GM12878 (cell line): ENCODE measurements at regions of chr6 and their contacts with region 1.

Region 1: GRCh38 chr6:122730775-122731386 is 48.6 kb upstream of the FABP7 start:
- DNase-seq: no peak
- ATAC-seq: peak; percentile 61
- H3K4me3 ChIP-seq: no peak overlapping the region
- H3K27ac ChIP-seq: no peak overlapping the region
- H3K4me1 ChIP-seq: no peaks in the 10 kb centered on the region
- H3K27me3 ChIP-seq: no peaks in the 10 kb centered on the region
- CTCF ChIP-seq: peak; percentile 61 to 77 (median 65)
- EP300 ChIP-seq: no peak
- POLR2A ChIP-seq: no peak
- RAD21 ChIP-seq: peak; percentile 86

Region 2: GRCh38 chr6:122471107-122472021 is 259.5 kb before region 1 on chr6 and contains the start of gene SERINC1:
- CTCF ChIA-PET with region 1: interaction called, 3 read pairs
- POLR2A ChIA-PET with region 1: no interaction called
- RAD21 ChIA-PET with region 1: no interaction called
- SMC1A ChIA-PET with region 1: interaction called, 6 read pairs
- in situ Hi-C with region 1: no loop called
- intact Hi-C with region 1: loop called (anchors 5 kb)
- DNase-seq: peak; percentile 66
- ATAC-seq: peak; percentile 98
- H3K4me3 ChIP-seq: peak within 1 kb of the TSS; percentile 92
- H3K27ac ChIP-seq: peak within 1 kb of the TSS; percentile 89
- H3K4me1 ChIP-seq: no peaks in the 10 kb centered on the region; the same call in 1 of the 2 replicates
- H3K27me3 ChIP-seq: no peaks in the 10 kb centered on the region
- CTCF ChIP-seq: no peak
- EP300 ChIP-seq: no peak
- POLR2A ChIP-seq: peak; percentile 91
- RAD21 ChIP-seq: no peak
- polyA plus RNA-seq, gene SERINC1: 18.5 to 22.5 TPM

Region 3: GRCh38 chr6:122609856-122610689 is 120.8 kb before region 1 on chr6 and contains the start of gene PKIB:
- CTCF ChIA-PET with region 1: interaction called, 46 read pairs
- POLR2A ChIA-PET with region 1: no interaction called
- RAD21 ChIA-PET with region 1: interaction called, 53 read pairs
- SMC1A ChIA-PET with region 1: interaction called, 61 read pairs
- in situ Hi-C with region 1: no loop called
- intact Hi-C with region 1: loop called (anchors 5 kb)
- DNase-seq: no peak
- ATAC-seq: peak; percentile 98
- H3K4me3 ChIP-seq: peak within 1 kb of the TSS; percentile 50
- H3K27ac ChIP-seq: no peak within 1 kb of the TSS
- H3K4me1 ChIP-seq: peaks cover 5% of the 10 kb centered on the region
- H3K27me3 ChIP-seq: peaks cover 8 to 17% of the 10 kb centered on the region in 2 experiments
- CTCF ChIP-seq: peak in 2 of 3 experiments; percentile 19 to 24; a peak in 2 of 6 replicates
- EP300 ChIP-seq: no peak
- POLR2A ChIP-seq: no peak
- RAD21 ChIP-seq: no peak
- polyA plus RNA-seq, gene PKIB: 0.97 to 1.8 TPM

Region 4: DNA sequence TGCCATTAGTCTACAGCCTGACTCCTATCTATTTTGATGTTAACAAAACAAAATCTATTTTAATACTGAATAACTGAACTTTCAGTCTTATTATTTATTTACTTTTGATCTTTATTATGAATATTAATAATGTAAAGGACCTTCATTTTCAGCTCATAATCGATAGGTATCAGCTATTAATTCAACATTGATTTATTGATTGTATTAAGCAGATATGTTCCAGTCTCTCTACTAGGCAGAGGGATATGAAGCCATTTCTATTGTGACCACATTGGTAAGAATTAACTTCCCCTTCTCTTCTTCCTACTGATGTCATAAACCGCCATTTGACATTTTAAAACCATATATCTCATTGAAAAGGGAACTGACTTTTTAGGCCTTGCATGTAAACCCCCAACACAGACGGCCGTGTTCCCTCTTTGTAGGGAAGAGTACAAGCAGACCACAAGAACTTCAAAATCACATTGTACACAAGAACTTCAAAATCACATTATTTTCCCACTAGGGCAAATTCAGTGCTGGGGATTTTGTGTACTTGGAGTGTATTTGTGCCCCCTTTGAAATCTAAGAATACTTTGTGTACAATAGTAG is 20.9 kb before region 1 on chr6:
- CTCF ChIA-PET with region 1: interaction called, 29 read pairs
- POLR2A ChIA-PET with region 1: no interaction called
- RAD21 ChIA-PET with region 1: interaction called, 10 read pairs
- SMC1A ChIA-PET with region 1: interaction called, 215 read pairs
- in situ Hi-C with region 1: no loop called
- intact Hi-C with region 1: no loop called
- DNase-seq: peak; percentile 11
- ATAC-seq: peak; percentile 82
- H3K4me3 ChIP-seq: no peak overlapping the region
- H3K27ac ChIP-seq: no peak overlapping the region
- H3K4me1 ChIP-seq: no peaks in the 10 kb centered on the region
- H3K27me3 ChIP-seq: no peaks in the 10 kb centered on the region; a peak in 1 of 4 replicates
- CTCF ChIP-seq: no peak
- EP300 ChIP-seq: peak; percentile 69 to 80; a peak in 3 of 4 replicates
- POLR2A ChIP-seq: no peak
- RAD21 ChIP-seq: no peak

Region 5: GRCh38 chr6:122789182-122790027 is 58.5 kb after region 1 on chr6 and contains the start of gene SMPDL3A:
- CTCF ChIA-PET with region 1: interaction called, 25 read pairs
- POLR2A ChIA-PET with region 1: no interaction called
- RAD21 ChIA-PET with region 1: interaction called, 6 read pairs
- SMC1A ChIA-PET with region 1: interaction called, 50 read pairs
- in situ Hi-C with region 1: no loop called
- intact Hi-C with region 1: no loop called
- DNase-seq: no peak
- ATAC-seq: peak; percentile 82
- H3K4me3 ChIP-seq: peak within 1 kb of the TSS; percentile 15; the same call in 1 of the 2 replicates
- H3K27ac ChIP-seq: no peak within 1 kb of the TSS
- H3K4me1 ChIP-seq: no peaks in the 10 kb centered on the region
- H3K27me3 ChIP-seq: peaks cover 7 to 16% of the 10 kb centered on the region in 2 experiments
- CTCF ChIP-seq: peak; percentile 3 to 38 (median 19); a peak in 2 of 6 replicates
- EP300 ChIP-seq: no peak
- POLR2A ChIP-seq: no peak
- RAD21 ChIP-seq: no peak
- polyA plus RNA-seq, gene SMPDL3A: 0.05 to 0.07 TPM

Region 6: DNA sequence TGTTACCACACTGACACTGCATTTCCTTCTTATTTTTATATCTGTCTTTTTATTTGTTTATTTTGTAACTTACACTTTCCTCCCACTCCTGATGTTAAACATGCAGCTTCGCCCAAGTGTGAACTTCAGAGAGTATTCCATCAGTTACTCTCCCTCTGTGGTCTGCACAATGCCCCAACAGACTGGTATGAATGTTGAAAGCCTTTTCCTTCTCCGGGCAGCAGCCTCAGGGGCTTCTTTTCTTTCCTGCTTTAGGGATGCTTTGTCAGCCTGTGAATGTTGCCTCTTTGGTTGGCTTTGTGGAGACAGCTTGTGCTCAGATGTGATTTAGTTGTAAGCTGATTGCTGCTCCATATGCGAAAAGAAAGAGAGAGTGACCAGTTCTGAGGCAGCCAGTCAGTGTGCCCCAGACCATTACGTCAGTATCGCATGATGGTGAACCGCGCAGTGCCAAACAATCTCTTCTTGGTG is 102.2 kb after region 1 on chr6:
- CTCF ChIA-PET with region 1: interaction called, 640 read pairs
- POLR2A ChIA-PET with region 1: interaction called, 3 read pairs
- RAD21 ChIA-PET with region 1: interaction called, 184 read pairs
- SMC1A ChIA-PET with region 1: interaction called, 237 read pairs
- in situ Hi-C with region 1: no loop called
- intact Hi-C with region 1: no loop called
- DNase-seq: no peak
- ATAC-seq: no peak
- H3K4me3 ChIP-seq: no peak overlapping the region
- H3K27ac ChIP-seq: no peak overlapping the region
- H3K4me1 ChIP-seq: no peaks in the 10 kb centered on the region
- H3K27me3 ChIP-seq: 0 out of 4 replicates have a peak, but pooled peaks cover 0 to 3% of the 10 kb centered on the region in 2 experiments
- CTCF ChIP-seq: no peak
- EP300 ChIP-seq: no peak
- POLR2A ChIP-seq: no peak
- RAD21 ChIP-seq: no peak

Region 7: GRCh38 chr6:123316733-123317323 is 585.9 kb after region 1 on chr6:
- CTCF ChIA-PET with region 1: interaction called, 18 read pairs
- POLR2A ChIA-PET with region 1: no interaction called
- RAD21 ChIA-PET with region 1: no interaction called
- SMC1A ChIA-PET with region 1: interaction called, 3 read pairs
- in situ Hi-C with region 1: loop called (anchors 5 kb)
- intact Hi-C with region 1: loop called (anchors 2 kb)
- DNase-seq: no peak
- ATAC-seq: no peak
- H3K4me3 ChIP-seq: no peak overlapping the region
- H3K27ac ChIP-seq: no peak overlapping the region
- H3K4me1 ChIP-seq: no peaks in the 10 kb centered on the region
- H3K27me3 ChIP-seq: no peaks in the 10 kb centered on the region
- CTCF ChIP-seq: peak in 1 of 3 experiments; percentile 26; a peak in 3 of 6 replicates
- EP300 ChIP-seq: no peak
- POLR2A ChIP-seq: no peak
- RAD21 ChIP-seq: peak; percentile 50; the same call in 1 of the 2 replicates